Right cardiac atrium (tissue), 5 donors: ENCODE measurements at regions of chr3 and their contacts with region 1.

Region 1: GRCh38 chr3:71859123-71859519 is 74.2 kb upstream of the PROK2 start:
- DNase-seq: no peak
- ATAC-seq: peak; percentile 55 to 61
- H3K4me3 ChIP-seq: no peak overlapping the region
- H3K27ac ChIP-seq: no peak overlapping the region
- H3K4me1 ChIP-seq: no peaks in the 10 kb centered on the region
- H3K27me3 ChIP-seq: no peaks in the 10 kb centered on the region

Region 2: DNA sequence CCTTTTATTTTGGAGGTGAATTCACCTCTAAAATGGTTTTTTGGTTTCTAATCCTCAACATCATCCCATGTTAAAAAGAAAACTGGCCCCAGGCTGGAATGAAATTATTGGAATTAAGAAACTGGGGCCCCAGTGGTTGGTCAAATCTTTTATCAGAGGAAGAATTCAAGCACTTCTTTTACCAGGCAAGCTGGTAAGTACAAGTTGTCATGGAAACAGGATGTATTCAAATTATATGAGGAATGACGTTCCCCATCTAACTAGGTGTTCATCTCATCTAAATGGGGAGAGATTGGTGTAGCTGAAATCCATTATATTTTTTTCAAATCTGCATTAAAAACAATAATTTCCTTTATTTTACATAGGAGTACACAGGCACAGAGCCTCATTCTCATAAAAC is 124.2 kb before region 1 on chr3:
- intact Hi-C with region 1: loop called in 1 of 4 experiments (anchors 10 kb)
- DNase-seq: no peak
- ATAC-seq: no peak
- H3K4me3 ChIP-seq: no peak overlapping the region
- H3K27ac ChIP-seq: no peak overlapping the region
- H3K4me1 ChIP-seq: peaks cover 2% of the 10 kb centered on the region
- H3K27me3 ChIP-seq: no peaks in the 10 kb centered on the region